T-cell (primary cell): ENCODE measurements at regions of chr3 and their contacts with region 1.

Region 1: GRCh38 chr3:138174421-138175122 is at the start of gene DBR1:
- DNase-seq: peak; percentile 49 to 87 (median 66)
- ATAC-seq: peak; percentile 90 to 93 (median 92)
- H3K4me3 ChIP-seq: peak within 1 kb of the TSS; percentile 81 to 86
- H3K4me3 Mint-ChIP-seq: peak within 1 kb of the TSS; percentile 86 to 99 (median 98)
- H3K27ac ChIP-seq: peak within 1 kb of the TSS; percentile 74
- H3K27ac Mint-ChIP-seq: peak within 1 kb of the TSS; percentile 97 to 100
- H3K4me1 ChIP-seq: peaks cover 6 to 23% of the 10 kb centered on the region in 2 experiments
- H3K4me1 Mint-ChIP-seq: peaks cover 37 to 50% (median 45%) of the 10 kb centered on the region in 3 donors
- H3K27me3 ChIP-seq: no peaks in the 10 kb centered on the region
- H3K27me3 Mint-ChIP-seq: no peaks in the 10 kb centered on the region
- total RNA-seq, gene DBR1: 13.1 to 32.2 (median 27.2) TPM

Region 2: DNA sequence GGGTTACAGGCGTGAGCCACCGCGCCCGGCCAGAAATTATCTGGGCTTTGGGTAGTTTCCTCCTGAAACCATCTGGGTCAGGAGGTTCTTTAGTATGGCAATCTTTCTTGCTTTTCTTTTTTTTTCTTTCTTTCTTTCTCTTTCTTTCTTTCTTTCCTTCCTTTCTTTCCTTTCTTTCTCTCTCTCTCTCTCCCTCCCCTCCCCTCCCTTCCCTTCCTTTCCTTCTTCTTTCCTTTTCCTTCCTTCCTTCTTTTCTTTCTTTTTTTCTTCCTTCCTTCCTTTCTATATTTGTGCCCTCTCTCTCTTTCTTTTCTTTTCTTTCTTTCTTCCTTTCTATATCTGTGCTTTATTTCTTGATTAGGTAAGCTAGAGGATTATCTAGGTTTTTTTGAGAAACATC is 16.8 kb before region 1 on chr3:
- CTCF ChIA-PET with region 1: interaction called in 1 of 2 experiments, 3 read pairs
- POLR2A ChIA-PET with region 1: interaction called in 1 of 2 experiments, 23 read pairs
- DNase-seq: no peak
- ATAC-seq: no peak
- H3K4me3 ChIP-seq: no peak overlapping the region
- H3K4me3 Mint-ChIP-seq: no peak overlapping the region
- H3K27ac ChIP-seq: no peak overlapping the region
- H3K27ac Mint-ChIP-seq: no peak overlapping the region
- H3K4me1 ChIP-seq: no peaks in the 10 kb centered on the region
- H3K4me1 Mint-ChIP-seq: no peaks in the 10 kb centered on the region
- H3K27me3 ChIP-seq: peaks cover 0 to 2% of the 10 kb centered on the region in 2 experiments
- H3K27me3 Mint-ChIP-seq: peaks cover 0 to 1% of the 10 kb centered on the region in 2 donors

Region 3: DNA sequence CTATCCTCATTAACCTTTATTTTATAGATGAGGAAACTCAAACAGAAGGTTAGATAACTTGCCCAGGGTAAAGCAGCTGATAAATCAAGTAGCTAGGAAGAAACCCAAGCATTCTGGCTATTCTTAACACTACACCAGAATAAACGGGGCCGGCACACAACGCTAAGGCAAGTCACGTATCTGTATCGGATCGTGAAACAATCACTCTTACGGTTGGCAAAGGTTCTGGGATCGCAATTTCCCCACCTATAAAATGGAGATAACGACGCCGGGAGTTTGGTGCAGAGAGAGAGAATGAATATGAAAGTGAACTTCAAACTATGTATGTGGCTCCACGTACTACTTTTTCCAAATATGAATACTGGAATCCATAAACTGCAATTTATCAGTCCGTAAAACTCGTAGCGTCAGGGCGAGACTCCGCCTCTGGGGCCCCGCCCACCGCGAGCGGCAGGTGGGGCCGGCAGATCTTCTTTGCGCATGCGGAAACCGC is 12.3 kb after region 1 on chr3:
- CTCF ChIA-PET with region 1: interaction called, 6 to 23 read pairs
- POLR2A ChIA-PET with region 1: interaction called, 12 to 16 read pairs
- DNase-seq: peak; percentile 76 to 94 (median 87)
- ATAC-seq: peak; percentile 92 to 97 (median 94)
- H3K4me3 ChIP-seq: peak overlapping the region; percentile 85 to 94
- H3K4me3 Mint-ChIP-seq: peak overlapping the region; percentile 93 to 98 (median 95)
- H3K27ac ChIP-seq: peak overlapping the region; percentile 88
- H3K27ac Mint-ChIP-seq: peak overlapping the region; percentile 97 to 99
- H3K4me1 ChIP-seq: peaks cover 8 to 11% of the 10 kb centered on the region in 2 experiments
- H3K4me1 Mint-ChIP-seq: peaks cover 39 to 54% (median 43%) of the 10 kb centered on the region in 3 donors
- H3K27me3 ChIP-seq: peaks cover 0 to 14% of the 10 kb centered on the region in 2 experiments
- H3K27me3 Mint-ChIP-seq: peaks cover 7 to 14% of the 10 kb centered on the region in 2 donors

Region 4: GRCh38 chr3:140031170-140031569 is 1856.6 kb after region 1 on chr3:
- CTCF ChIA-PET with region 1: no interaction called
- POLR2A ChIA-PET with region 1: no interaction called
- DNase-seq: no peak
- ATAC-seq: no peak
- H3K4me3 ChIP-seq: no peak overlapping the region
- H3K4me3 Mint-ChIP-seq: no peak overlapping the region
- H3K27ac ChIP-seq: no peak overlapping the region
- H3K27ac Mint-ChIP-seq: no peak overlapping the region
- H3K4me1 ChIP-seq: no peaks in the 10 kb centered on the region
- H3K4me1 Mint-ChIP-seq: no peaks in the 10 kb centered on the region
- H3K27me3 ChIP-seq: peaks cover 0 to 3% of the 10 kb centered on the region in 2 experiments
- H3K27me3 Mint-ChIP-seq: peaks cover 0 to 8% of the 10 kb centered on the region in 2 donors